Pancreas (tissue), 10 donors: ENCODE measurements at regions of chr16 and their contacts with region 1.

Region 1: GRCh38 chr16:24146523-24146922 is 109.6 kb upstream of the CACNG3 start:
- DNase-seq: no peak
- ATAC-seq: no peak
- H3K4me3 ChIP-seq: no peak overlapping the region
- H3K27ac ChIP-seq: no peak overlapping the region
- H3K4me1 ChIP-seq: no peaks in the 10 kb centered on the region
- H3K27me3 ChIP-seq: peaks cover 0 to 3% (median 0%) of the 10 kb centered on the region in 4 donors
- CTCF ChIP-seq: no peak

Region 2: DNA sequence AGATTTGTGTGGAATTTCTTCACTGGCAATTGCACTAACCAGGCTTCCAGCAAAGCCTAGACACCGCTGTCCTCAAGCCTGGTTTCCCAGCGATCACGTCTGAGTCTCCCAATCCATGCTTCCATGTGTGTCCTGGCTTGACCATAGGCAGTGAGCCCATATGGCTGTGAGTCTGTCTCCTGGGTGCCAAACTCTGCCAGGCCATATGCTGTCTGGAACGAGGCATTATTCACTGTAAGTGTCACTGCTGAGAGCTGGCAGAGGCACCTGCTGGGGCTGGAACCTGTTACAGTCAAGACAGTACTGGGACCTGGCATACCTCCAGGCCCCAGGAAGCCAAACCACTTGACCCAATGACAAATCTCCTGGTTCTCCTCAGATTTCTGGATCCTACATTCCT is 1272.1 kb before region 1 on chr16:
- intact Hi-C with region 1: loop called in 1 of 3 experiments (anchors 5 kb)
- DNase-seq: no peak
- ATAC-seq: no peak
- H3K4me3 ChIP-seq: no peak overlapping the region
- H3K27ac ChIP-seq: no peak overlapping the region
- H3K4me1 ChIP-seq: no peaks in the 10 kb centered on the region
- H3K27me3 ChIP-seq: peaks cover 0 to 9% (median 0%) of the 10 kb centered on the region in 4 donors
- CTCF ChIP-seq: no peak